ENCODE measurements at regions of chr15 and their contacts with region 1.

Region 1: DNA sequence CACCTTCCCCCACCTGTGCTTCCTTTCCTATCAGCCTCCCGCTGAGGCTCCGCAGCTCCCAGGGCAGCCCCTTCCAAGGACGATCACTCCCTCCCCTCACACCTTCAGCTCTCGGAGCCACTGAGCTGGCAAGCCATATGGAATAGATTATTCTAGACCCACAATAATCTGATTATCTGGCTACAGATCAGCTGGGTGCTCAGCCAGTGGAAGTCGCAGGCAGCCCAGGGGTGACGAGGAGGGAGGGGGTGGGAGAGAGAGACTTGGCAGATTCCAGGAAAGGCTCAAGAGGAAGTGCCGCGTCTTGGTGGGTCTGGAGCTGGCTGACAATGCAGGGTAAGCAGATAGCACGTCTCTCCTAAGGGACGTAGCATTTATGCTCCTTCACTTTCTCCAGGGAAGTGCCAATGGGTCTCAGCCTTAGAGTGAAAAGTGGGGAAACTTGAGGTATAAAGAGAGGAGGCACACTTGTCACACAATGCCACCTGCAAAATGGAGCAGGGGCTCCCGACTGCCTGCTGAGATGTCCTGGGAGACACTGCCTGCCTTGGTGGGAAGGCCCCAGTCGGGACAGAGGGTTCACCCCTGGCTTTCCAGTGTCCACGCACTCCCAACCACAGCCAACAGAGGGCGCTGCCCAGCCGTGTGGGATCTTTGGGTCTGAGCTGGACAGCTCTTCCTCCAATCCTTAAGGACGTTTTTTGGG is 9.4 kb upstream of the MESP1 start:
- DNase-seq: peak; percentile 83
- ATAC-seq: peak; percentile 98
- H3K4me3 Mint-ChIP-seq: no peak overlapping the region
- H3K27ac Mint-ChIP-seq: no peak overlapping the region
- H3K4me1 Mint-ChIP-seq: no peaks in the 10 kb centered on the region
- H3K27me3 Mint-ChIP-seq: peaks cover 6% of the 10 kb centered on the region
- CTCF ChIP-seq: peak; percentile 82

Region 2: GRCh38 chr15:89776274-89777072 is 16.0 kb after region 1 on chr15 and contains the start of gene MESP2:
- CTCF ChIA-PET with region 1: interaction called, 20 read pairs
- POLR2A ChIA-PET with region 1: no interaction called
- intact Hi-C with region 1: no loop called
- DNase-seq: peak; percentile 47
- ATAC-seq: peak; percentile 76
- H3K4me3 Mint-ChIP-seq: peak within 1 kb of the TSS; percentile 55
- H3K27ac Mint-ChIP-seq: no peak within 1 kb of the TSS
- H3K4me1 Mint-ChIP-seq: peaks cover 5% of the 10 kb centered on the region
- H3K27me3 Mint-ChIP-seq: peaks cover 21% of the 10 kb centered on the region
- CTCF ChIP-seq: no peak
- total RNA-seq, gene MESP2: not detected

Region 3: DNA sequence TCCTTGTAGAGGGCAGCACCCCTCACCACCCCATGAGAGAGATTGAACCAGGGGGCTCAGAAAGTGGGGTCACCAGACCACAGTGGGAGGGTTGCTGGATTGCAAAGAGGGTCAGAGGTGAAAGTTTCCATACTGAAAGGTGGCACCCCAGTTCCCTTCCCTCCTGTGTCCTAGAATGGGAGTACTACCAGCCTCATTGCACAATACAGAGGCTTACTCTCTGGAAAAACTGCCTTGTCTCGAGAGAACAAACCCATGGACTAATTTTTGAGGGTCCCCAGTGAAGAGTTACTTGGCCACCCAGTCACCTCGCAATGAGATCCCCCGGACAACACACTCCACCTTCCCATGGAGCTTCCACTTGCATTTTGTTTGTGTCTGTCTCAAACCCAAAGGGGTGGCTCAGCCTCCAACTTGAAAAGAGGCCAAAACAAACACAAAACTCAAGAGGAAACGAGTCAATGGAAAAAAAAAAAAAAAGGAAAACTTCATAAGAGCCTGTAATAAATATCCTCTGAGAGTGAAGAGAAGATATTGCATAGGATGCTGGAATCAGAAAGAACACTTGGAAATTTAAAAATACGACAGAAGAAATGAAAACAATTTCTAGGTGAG is 34.3 kb after region 1 on chr15:
- CTCF ChIA-PET with region 1: no interaction called
- POLR2A ChIA-PET with region 1: no interaction called
- intact Hi-C with region 1: no loop called
- DNase-seq: no peak
- ATAC-seq: no peak
- H3K4me3 Mint-ChIP-seq: no peak overlapping the region
- H3K27ac Mint-ChIP-seq: no peak overlapping the region
- H3K4me1 Mint-ChIP-seq: no peaks in the 10 kb centered on the region
- H3K27me3 Mint-ChIP-seq: peaks cover 2% of the 10 kb centered on the region
- CTCF ChIP-seq: no peak

Region 4: GRCh38 chr15:89888214-89888804 is 127.9 kb after region 1 on chr15:
- CTCF ChIA-PET with region 1: interaction called, 33 read pairs
- POLR2A ChIA-PET with region 1: no interaction called
- intact Hi-C with region 1: no loop called
- DNase-seq: no peak
- ATAC-seq: no peak
- H3K4me3 Mint-ChIP-seq: no peak overlapping the region
- H3K27ac Mint-ChIP-seq: no peak overlapping the region
- H3K4me1 Mint-ChIP-seq: peaks cover 17% of the 10 kb centered on the region
- H3K27me3 Mint-ChIP-seq: no peaks in the 10 kb centered on the region
- CTCF ChIP-seq: peak; percentile 15